Activated T-helper 1 cell treated with anti-CD3 and anti-CD28 coated beads, Interleukin-12 subunit alpha, Interleukin-12 subunit beta, Interleukin-2, Interleukin-4 antibody, amounts not matched to agents 30 ng/mL and 10 ng/mL and 1 ng/mL, durations not matched to agents 14 hours and 24 hours and 36 hours (primary cell): ENCODE measurements at regions of chr10 and their contacts with region 1.

Region 1: DNA sequence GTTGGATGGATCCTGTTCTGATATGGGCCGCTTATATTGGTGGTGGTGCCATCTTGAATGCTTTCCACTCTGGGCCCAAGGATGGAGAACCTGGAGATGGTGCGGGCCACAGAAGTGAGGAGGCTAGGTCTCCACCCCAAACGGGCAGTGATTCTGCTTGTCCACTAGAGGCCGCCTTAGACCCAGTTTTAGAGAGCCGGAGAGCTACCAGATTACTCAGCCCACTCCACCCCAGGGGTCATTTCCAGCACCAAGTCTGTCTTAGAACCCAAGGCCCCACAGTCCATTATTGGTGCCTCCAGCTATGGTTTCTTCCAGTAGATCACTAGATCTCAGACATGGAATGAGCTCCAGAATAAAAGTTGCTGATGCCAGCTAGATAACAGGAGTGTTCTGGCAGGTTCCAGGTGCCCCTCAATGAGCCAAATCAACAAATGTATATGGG is 11.8 kb upstream of the CAMK2G start:
- DNase-seq: peak; percentile 49
- H3K4me3 Mint-ChIP-seq: no peak overlapping the region
- H3K27ac Mint-ChIP-seq: no peak overlapping the region
- H3K4me1 Mint-ChIP-seq: peaks cover 28% of the 10 kb centered on the region
- H3K27me3 Mint-ChIP-seq: peaks cover 7% of the 10 kb centered on the region

Region 2: GRCh38 chr10:73940634-73941221 is 54.6 kb after region 1 on chr10:
- intact Hi-C with region 1: loop called (anchors 1 kb)
- DNase-seq: peak; percentile 80
- H3K4me3 Mint-ChIP-seq: no peak overlapping the region
- H3K27ac Mint-ChIP-seq: no peak overlapping the region
- H3K4me1 Mint-ChIP-seq: peaks cover 24% of the 10 kb centered on the region
- H3K27me3 Mint-ChIP-seq: peaks cover 15% of the 10 kb centered on the region

Region 3: DNA sequence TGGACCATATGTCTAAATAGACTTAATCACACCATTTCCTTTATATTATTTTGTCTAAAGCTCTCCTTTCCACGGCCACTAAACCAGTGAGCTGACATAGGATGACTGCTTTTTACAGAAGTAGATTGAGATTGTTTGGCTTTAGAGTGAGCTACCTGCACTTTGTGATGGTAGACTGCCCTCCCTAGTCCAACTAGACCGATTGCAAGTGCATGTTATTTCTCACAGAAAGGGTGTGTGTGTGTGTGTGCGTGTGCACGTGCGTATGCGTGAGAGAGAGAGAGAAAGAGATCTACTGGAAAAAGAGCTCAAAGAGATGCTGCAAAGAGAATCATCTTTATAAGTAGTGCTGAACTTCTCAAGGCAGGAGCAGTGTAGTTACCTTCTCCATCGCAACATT is 172.6 kb after region 1 on chr10:
- intact Hi-C with region 1: loop called (anchors 2 kb)
- DNase-seq: no peak
- H3K4me3 Mint-ChIP-seq: no peak overlapping the region
- H3K27ac Mint-ChIP-seq: peak overlapping the region; percentile 18
- H3K4me1 Mint-ChIP-seq: peaks cover 45% of the 10 kb centered on the region
- H3K27me3 Mint-ChIP-seq: peaks cover 4% of the 10 kb centered on the region

Region 4: DNA sequence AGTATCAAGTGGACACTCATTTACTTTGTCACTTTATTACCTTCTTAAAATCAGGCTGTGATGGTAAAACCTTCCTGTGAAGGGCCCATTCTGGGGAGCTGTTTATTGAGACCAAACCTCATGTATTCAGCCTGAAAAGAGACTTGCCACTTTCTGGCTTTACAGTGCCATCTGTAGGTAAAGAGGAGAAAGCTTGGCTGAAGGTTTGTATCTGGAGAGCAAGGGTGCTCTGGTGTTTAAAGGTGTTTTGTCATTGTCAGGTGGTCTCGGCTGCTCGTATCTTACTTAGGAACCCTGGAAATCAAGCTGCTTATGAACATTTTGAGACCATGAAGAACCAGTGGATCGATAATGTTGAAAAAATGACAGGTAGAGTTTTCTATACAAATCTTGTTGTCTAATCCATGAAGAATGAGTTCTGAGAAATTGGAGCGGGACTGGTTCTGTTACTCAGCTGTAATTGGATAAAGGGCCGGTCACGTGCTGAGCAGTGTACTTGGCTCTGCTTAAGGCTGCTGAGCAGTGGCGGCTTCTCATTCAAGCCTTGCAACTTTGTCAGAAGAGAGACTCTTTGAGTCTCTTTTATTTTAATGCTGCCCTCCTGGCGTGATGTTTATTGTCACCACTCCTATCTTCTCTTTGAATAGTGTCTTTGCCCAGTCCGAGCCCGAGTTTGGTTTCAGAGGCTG is 217.6 kb after region 1 on chr10:
- intact Hi-C with region 1: loop called (anchors 1 kb)
- DNase-seq: no peak
- H3K4me3 Mint-ChIP-seq: no peak overlapping the region
- H3K27ac Mint-ChIP-seq: no peak overlapping the region
- H3K4me1 Mint-ChIP-seq: peaks cover 8% of the 10 kb centered on the region
- H3K27me3 Mint-ChIP-seq: no peaks in the 10 kb centered on the region